CD4-positive, alpha-beta memory T cell (primary cell): ENCODE measurements at regions of chr1 and their contacts with region 1.

Region 1: GRCh38 chr1:205750138-205751035 is at the start of gene NUCKS1:
- DNase-seq: peak; percentile 94 to 99 (median 98)
- H3K4me3 ChIP-seq: peak within 1 kb of the TSS; percentile 83 to 91
- H3K4me3 Mint-ChIP-seq: peak within 1 kb of the TSS; percentile 95 to 99 (median 98)
- H3K27ac ChIP-seq: peak within 1 kb of the TSS; percentile 87
- H3K27ac Mint-ChIP-seq: peak within 1 kb of the TSS; percentile 95 to 100 (median 98)
- H3K4me1 ChIP-seq: peaks cover 34% of the 10 kb centered on the region
- H3K4me1 Mint-ChIP-seq: peaks cover 25 to 57% (median 39%) of the 10 kb centered on the region in 4 donors
- H3K27me3 ChIP-seq: no peaks in the 10 kb centered on the region
- H3K27me3 Mint-ChIP-seq: peaks cover 0 to 2% of the 10 kb centered on the region in 2 donors
- total RNA-seq, gene NUCKS1: 111 to 117 TPM

Region 2: GRCh38 chr1:205711104-205712020 is 39.0 kb before region 1 on chr1:
- CTCF ChIA-PET with region 1: interaction called, 8 read pairs
- POLR2A ChIA-PET with region 1: interaction called, 12 read pairs
- intact Hi-C with region 1: loop called (anchors 5 kb)
- DNase-seq: peak; percentile 54 to 67 (median 62)
- H3K4me3 ChIP-seq: no peak overlapping the region
- H3K4me3 Mint-ChIP-seq: no peak overlapping the region
- H3K27ac ChIP-seq: no peak overlapping the region
- H3K27ac Mint-ChIP-seq: peak overlapping the region in 4 of 7 donors; percentile 25 to 68 (median 56)
- H3K4me1 ChIP-seq: peaks cover 3% of the 10 kb centered on the region
- H3K4me1 Mint-ChIP-seq: peaks cover 5 to 14% (median 11%) of the 10 kb centered on the region in 4 donors
- H3K27me3 ChIP-seq: no peaks in the 10 kb centered on the region
- H3K27me3 Mint-ChIP-seq: no peaks in the 10 kb centered on the region

Region 3: GRCh38 chr1:205729945-205730610 is 20.3 kb before region 1 on chr1:
- CTCF ChIA-PET with region 1: interaction called, 7 read pairs
- POLR2A ChIA-PET with region 1: interaction called, 10 read pairs
- intact Hi-C with region 1: loop called (anchors 2 kb)
- DNase-seq: no peak
- H3K4me3 ChIP-seq: no peak overlapping the region
- H3K4me3 Mint-ChIP-seq: no peak overlapping the region
- H3K27ac ChIP-seq: no peak overlapping the region
- H3K27ac Mint-ChIP-seq: peak overlapping the region in 3 of 7 donors; percentile 2 to 46 (median 13)
- H3K4me1 ChIP-seq: peaks cover 17% of the 10 kb centered on the region
- H3K4me1 Mint-ChIP-seq: peaks cover 17 to 49% (median 32%) of the 10 kb centered on the region in 4 donors
- H3K27me3 ChIP-seq: no peaks in the 10 kb centered on the region
- H3K27me3 Mint-ChIP-seq: no peaks in the 10 kb centered on the region

Region 4: DNA sequence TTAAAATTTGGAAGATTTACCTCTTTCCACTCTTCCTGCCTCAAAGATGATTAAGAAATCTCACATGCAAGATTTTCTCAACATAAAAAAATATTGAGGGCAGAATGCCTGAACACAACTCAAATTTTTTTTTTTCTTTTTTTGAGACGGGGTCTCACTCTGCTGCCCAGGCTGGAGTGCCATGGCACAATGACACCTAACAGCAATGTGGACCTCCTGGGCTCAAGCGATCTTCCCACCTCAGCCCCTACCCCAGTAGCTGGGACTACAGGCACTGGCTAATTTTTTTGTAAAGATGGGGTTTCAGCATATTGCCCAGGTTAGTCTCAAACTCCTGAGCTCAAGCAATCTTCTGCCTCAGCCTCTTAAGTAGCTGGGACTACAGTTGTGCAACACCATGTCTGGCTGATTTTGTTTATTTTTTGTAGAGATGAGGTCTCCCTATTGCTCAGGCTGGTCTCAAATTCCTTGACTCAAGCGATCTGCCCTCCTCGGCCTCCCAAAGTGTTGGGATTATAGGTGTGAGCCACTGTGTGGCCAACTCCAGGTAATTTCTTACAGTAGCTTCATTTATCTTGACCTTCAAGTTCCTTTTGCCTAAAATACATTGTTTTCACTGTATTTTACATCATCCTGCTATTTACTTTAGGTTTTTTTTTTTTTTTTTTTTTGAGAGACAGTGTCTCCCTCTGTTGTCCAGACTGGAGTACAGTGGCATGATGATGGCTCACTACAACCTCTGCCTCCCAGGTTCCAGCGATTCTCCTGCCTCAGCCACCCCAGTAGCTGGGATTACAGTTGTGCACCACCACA is 10.8 kb before region 1 on chr1:
- CTCF ChIA-PET with region 1: interaction called, 4 read pairs
- POLR2A ChIA-PET with region 1: interaction called, 27 read pairs
- intact Hi-C with region 1: loop called (anchors 2 kb)
- DNase-seq: no peak
- H3K4me3 ChIP-seq: no peak overlapping the region
- H3K4me3 Mint-ChIP-seq: peak overlapping the region in 1 of 8 donors; percentile 17
- H3K27ac ChIP-seq: no peak overlapping the region
- H3K27ac Mint-ChIP-seq: peak overlapping the region in 2 of 7 donors; percentile 30 to 57
- H3K4me1 ChIP-seq: peaks cover 24% of the 10 kb centered on the region
- H3K4me1 Mint-ChIP-seq: peaks cover 34 to 52% (median 42%) of the 10 kb centered on the region in 4 donors
- H3K27me3 ChIP-seq: no peaks in the 10 kb centered on the region
- H3K27me3 Mint-ChIP-seq: no peaks in the 10 kb centered on the region

Region 5: DNA sequence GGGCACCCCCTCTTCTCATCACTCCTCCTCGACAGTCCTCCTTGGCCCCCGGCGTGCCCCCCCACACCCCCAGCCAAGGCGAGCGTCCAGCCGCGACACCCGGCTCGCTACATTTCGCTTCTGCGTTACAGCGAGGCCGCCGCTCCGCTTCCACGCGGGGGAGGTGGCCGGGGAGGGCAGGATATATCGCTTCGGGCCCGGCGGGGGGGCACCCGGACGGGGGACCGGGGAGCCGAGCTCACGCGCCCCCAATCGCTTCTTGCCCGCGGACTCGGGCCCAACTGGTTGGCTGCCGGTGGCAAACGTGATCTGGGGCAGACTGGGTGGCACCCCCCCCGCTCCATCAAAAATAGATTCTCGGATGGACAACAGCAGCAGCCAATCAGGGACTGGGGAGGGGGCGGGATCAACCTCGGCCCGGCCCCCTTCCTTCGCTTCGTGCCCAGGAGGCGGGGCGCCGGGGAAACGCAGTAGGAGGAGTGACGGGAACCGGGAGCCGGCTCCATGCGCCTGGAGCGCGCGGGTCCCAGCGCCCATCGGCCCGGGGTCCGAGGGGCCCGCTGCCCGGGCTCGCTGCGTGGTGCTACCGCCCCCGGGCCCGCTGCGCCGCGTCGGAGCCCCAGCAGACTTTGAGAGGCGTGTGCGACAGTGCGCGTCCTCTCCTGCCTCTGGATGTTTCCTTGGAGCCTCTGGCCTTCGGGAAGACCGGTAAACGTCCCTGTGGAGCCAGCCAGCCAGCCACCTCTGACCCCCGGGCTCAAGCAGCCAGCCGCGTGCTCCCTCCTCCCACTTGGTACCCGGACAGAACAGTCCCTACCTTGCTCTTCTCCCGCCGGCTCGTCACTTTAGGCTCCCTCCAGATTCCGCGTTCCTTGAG is 62.7 kb after region 1 on chr1 and contains the start of gene SLC41A1:
- CTCF ChIA-PET with region 1: no interaction called
- POLR2A ChIA-PET with region 1: interaction called, 23 read pairs
- intact Hi-C with region 1: loop called (anchors 1 kb)
- DNase-seq: peak; percentile 90 to 96 (median 93)
- H3K4me3 ChIP-seq: peak within 1 kb of the TSS; percentile 71 to 88
- H3K4me3 Mint-ChIP-seq: peak within 1 kb of the TSS; percentile 91 to 96 (median 94)
- H3K27ac ChIP-seq: peak within 1 kb of the TSS; percentile 69
- H3K27ac Mint-ChIP-seq: peak within 1 kb of the TSS; percentile 82 to 95 (median 93)
- H3K4me1 ChIP-seq: peaks cover 54% of the 10 kb centered on the region
- H3K4me1 Mint-ChIP-seq: peaks cover 37 to 62% (median 49%) of the 10 kb centered on the region in 4 donors
- H3K27me3 ChIP-seq: no peaks in the 10 kb centered on the region
- H3K27me3 Mint-ChIP-seq: no peaks in the 10 kb centered on the region
- total RNA-seq, gene SLC41A1: 26.1 to 26.3 TPM